ENCODE measurements at regions of chr7 and their contacts with region 1.

Region 1: GRCh38 chr7:143214789-143215679 is 6.8 kb upstream of the TAS2R40 start:
- DNase-seq: no peak
- ATAC-seq: peak; percentile 85 to 92
- H3K4me3 ChIP-seq: no peak overlapping the region
- H3K27ac ChIP-seq: no peak overlapping the region
- H3K4me1 ChIP-seq: no peaks in the 10 kb centered on the region
- H3K27me3 ChIP-seq: peaks cover 4% of the 10 kb centered on the region
- CTCF ChIP-seq: peak; percentile 99

Region 2: DNA sequence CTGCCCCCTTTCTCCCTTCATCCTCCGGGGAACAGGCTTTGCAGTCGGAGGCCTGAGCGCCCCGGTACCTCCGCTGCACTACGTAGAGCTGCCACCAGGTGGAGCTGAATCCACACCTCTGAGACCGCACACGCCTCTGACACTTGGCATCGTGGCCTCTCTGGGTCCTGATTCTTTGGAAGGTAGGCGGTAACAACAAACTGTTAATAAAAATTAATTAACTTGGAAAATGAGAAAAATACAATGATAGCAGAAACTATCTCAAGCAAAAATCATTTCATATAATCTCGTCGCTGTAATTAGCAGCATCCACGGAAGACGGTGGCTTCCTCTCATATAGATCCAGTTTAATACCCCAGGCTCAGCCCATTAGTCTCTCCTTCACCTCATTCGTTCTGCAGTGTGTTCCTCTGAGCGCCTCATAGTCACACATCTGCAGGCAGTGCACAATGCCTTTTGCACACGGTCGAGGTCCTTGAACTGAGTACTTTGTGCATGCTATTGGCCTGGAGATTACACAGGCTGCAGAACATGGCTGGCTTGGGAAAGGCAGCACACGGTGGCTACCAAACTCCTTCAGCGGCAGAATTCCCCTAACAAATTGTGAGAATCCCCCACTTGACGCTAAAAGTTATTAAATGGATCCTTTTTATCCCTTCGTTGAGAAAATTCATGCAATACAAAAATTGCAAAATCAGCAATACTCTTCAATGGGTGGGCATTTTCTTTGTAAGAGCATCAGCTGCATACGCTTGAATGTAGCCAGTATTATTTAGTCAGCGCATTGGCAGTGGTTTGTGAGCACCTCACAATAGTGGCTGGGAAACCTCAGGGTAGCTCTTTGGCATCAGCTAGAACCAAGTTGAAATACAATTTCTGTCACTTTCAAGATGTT is 206.8 kb before region 1 on chr7:
- intact Hi-C with region 1: loop called (anchors 5 kb)
- DNase-seq: peak; percentile 85
- ATAC-seq: peak; percentile 93 to 96
- H3K4me3 ChIP-seq: no peak overlapping the region
- H3K27ac ChIP-seq: no peak overlapping the region
- H3K4me1 ChIP-seq: peaks cover 1% of the 10 kb centered on the region
- H3K27me3 ChIP-seq: peaks cover 4% of the 10 kb centered on the region
- CTCF ChIP-seq: peak; percentile 96

Measured in lower lobe of right lung (tissue), 2 donors.